Activated CD4-positive, alpha-beta memory T cell treated with anti-CD3 and anti-CD28 coated beads for 36 hours (primary cell): ENCODE measurements at regions of chr1 and their contacts with region 1.

Region 1: DNA sequence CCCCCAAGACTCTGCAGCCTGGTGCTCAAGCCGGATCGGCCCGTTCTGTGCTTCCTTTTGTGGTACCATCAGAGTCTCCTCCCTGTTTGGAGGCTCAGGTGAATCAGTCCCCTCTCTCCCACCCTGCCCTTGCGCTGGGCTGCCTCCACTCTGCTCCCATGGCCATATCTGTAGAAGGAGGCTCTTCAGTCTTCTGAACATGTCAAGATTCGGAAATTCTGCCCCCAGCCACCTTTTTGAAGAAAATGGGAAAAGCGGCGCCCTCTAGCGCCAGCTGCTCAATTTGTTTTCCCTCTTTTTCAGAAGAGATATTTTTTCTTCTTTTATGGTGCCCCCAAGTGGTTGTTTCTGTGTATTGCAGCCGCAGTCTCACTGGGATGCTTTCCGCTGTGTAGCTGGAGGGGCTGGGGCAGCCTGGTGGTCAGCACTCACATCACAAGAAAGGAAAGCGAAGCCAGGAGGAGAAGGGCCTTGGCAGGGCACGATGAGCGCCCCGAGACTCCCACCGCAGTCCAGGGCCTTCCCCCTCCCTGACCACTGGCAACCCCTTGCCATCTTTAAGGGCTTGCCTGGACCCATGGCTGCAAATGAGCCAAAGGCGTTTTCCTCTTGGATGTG is 58.4 kb upstream of the CACNA1E start:
- DNase-seq: peak; percentile 84
- H3K4me3 Mint-ChIP-seq: peak overlapping the region; percentile 41
- H3K27ac Mint-ChIP-seq: no peak overlapping the region
- H3K4me1 Mint-ChIP-seq: peaks cover 12% of the 10 kb centered on the region
- H3K27me3 Mint-ChIP-seq: peaks cover 8% of the 10 kb centered on the region

Region 2: GRCh38 chr1:181318022-181318857 is 106.7 kb before region 1 on chr1:
- CTCF ChIA-PET with region 1: interaction called, 5 read pairs
- POLR2A ChIA-PET with region 1: no interaction called
- intact Hi-C with region 1: loop called (anchors 5 kb)
- DNase-seq: no peak
- H3K4me3 Mint-ChIP-seq: peak overlapping the region; percentile 64
- H3K27ac Mint-ChIP-seq: no peak overlapping the region
- H3K4me1 Mint-ChIP-seq: peaks cover 22% of the 10 kb centered on the region
- H3K27me3 Mint-ChIP-seq: peaks cover 57% of the 10 kb centered on the region

Region 3: GRCh38 chr1:181356505-181357340 is 68.2 kb before region 1 on chr1:
- CTCF ChIA-PET with region 1: interaction called, 4 read pairs
- POLR2A ChIA-PET with region 1: no interaction called
- intact Hi-C with region 1: loop called (anchors 10 kb)
- DNase-seq: no peak
- H3K4me3 Mint-ChIP-seq: no peak overlapping the region
- H3K27ac Mint-ChIP-seq: no peak overlapping the region
- H3K4me1 Mint-ChIP-seq: no peaks in the 10 kb centered on the region
- H3K27me3 Mint-ChIP-seq: no peaks in the 10 kb centered on the region